ENCODE measurements at regions of chr2 and their contacts with region 1.

Region 1: DNA sequence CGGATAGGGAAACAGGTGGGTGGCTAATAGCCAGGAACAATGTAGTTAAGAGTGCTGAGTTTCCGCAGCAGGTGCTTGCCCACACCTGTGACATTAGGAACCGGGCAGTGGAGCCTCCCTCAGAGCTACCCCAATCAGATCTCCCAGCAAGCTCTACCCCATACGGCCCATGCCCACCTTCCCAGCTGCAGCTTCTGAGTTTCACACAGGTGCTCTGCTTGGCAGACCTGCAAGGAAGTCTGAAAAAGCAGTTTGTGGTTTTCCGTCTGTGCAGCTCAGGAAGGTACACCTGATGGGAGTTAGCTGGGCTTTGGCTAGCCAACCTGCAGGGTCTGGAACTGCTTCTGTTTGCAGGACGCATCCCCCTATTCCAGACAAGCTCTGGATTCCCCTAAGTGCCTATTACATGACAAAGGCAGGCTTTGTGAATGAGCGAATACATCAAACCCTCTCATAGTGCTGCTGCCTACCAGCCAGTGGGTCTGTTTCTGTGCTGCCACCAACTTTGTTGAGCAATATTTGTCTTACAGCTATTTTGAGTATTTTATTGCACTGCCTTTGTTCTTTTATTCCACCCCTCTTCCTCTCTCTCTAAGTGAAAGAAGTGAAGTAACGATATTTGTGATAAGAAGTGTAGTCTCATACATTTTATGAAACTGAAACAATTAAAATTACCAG is 24.7 kb upstream of the CEP68 start:
- DNase-seq: no peak

Region 2: GRCh38 chr2:64998658-64999061 is 32.8 kb before region 1 on chr2:
- intact Hi-C with region 1: loop called (anchors 5 kb)
- DNase-seq: peak in 2 of 10 donors; percentile 33 to 50